AG04450 (cell line): ENCODE measurements at regions of chr5 and their contacts with region 1.

Region 1: GRCh38 chr5:151115274-151115905 is 34.6 kb upstream of the TNIP1 start:
- DNase-seq: no peak
- H3K4me3 ChIP-seq: no peak overlapping the region
- H3K27ac ChIP-seq: no peak overlapping the region
- H3K27me3 ChIP-seq: no peaks in the 10 kb centered on the region
- CTCF ChIP-seq: peak; percentile 100

Region 2: GRCh38 chr5:151002250-151002649 is 113.1 kb before region 1 on chr5:
- CTCF ChIA-PET with region 1: interaction called, 229 read pairs
- POLR2A ChIA-PET with region 1: no interaction called
- DNase-seq: no peak
- H3K4me3 ChIP-seq: no peak overlapping the region
- H3K27ac ChIP-seq: no peak overlapping the region
- H3K27me3 ChIP-seq: peaks cover 9% of the 10 kb centered on the region
- CTCF ChIP-seq: peak; percentile 59

Region 3: DNA sequence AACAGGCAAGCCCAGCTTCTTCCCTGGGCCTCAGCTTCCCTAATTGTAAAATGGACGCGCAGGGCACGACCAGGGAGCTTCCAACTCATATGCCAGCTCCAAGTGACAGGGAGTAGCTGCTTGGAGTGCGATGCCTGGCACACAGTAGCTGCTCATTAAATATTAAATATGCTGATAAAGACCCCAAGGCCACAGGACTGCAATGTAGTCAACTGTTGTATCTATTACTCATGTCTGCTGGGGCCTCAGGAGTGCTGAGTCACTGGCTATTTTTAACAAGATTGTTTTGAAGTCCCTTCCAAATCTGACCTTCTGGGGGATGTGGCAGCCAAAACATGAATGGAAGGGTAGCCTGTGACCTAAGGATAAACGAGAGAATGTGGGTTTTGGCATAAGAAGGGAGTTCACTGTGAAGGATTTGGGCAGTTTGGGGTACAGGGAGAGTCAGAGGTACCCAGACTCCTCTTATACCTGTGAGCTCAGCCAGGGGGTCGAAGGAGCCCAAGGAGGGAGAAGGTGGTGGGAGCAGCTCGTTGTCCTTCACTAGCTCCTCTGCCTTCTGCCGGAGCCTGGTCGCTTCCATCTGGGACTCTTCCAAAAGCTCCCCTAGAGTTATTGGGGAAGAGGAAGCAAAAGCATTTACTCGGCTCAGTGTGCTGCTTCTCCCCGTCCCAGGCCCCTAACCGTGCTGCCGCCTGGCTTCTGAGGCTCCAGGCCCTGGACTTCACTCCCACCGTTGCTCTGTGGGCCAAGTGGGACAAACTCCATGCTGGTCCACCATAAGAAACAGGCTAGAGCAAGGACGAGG is 52.0 kb before region 1 on chr5:
- CTCF ChIA-PET with region 1: interaction called, 526 read pairs
- POLR2A ChIA-PET with region 1: no interaction called
- DNase-seq: no peak
- H3K4me3 ChIP-seq: no peak overlapping the region
- H3K27ac ChIP-seq: peak overlapping the region; percentile 65
- H3K27me3 ChIP-seq: no peaks in the 10 kb centered on the region
- CTCF ChIP-seq: 0 out of 2 replicates have a peak, but pooled peaks have one; percentile 3

Region 4: GRCh38 chr5:151086905-151087360 is 28.5 kb before region 1 on chr5:
- CTCF ChIA-PET with region 1: interaction called, 16 read pairs
- POLR2A ChIA-PET with region 1: no interaction called
- DNase-seq: no peak
- H3K4me3 ChIP-seq: peak overlapping the region; percentile 31
- H3K27ac ChIP-seq: no peak overlapping the region
- H3K27me3 ChIP-seq: no peaks in the 10 kb centered on the region
- CTCF ChIP-seq: no peak

Region 5: GRCh38 chr5:151134238-151134637 is 18.8 kb after region 1 on chr5:
- CTCF ChIA-PET with region 1: interaction called, 53 read pairs
- POLR2A ChIA-PET with region 1: no interaction called
- DNase-seq: no peak
- H3K4me3 ChIP-seq: no peak overlapping the region
- H3K27ac ChIP-seq: no peak overlapping the region
- H3K27me3 ChIP-seq: no peaks in the 10 kb centered on the region
- CTCF ChIP-seq: no peak

Region 6: GRCh38 chr5:151157426-151158286 is 42.3 kb after region 1 on chr5 and contains the start of gene ANXA6:
- CTCF ChIA-PET with region 1: interaction called, 84 read pairs
- POLR2A ChIA-PET with region 1: interaction called, 5 read pairs
- DNase-seq: peak; percentile 49
- H3K4me3 ChIP-seq: peak within 1 kb of the TSS; percentile 95
- H3K27ac ChIP-seq: peak within 1 kb of the TSS; percentile 72
- H3K27me3 ChIP-seq: no peaks in the 10 kb centered on the region
- CTCF ChIP-seq: no peak
- polyA plus RNA-seq, gene ANXA6: 502 and 538 TPM in 2 replicates